GM12878 (cell line): ENCODE measurements at regions of chrX and their contacts with region 1.

Region 1: DNA sequence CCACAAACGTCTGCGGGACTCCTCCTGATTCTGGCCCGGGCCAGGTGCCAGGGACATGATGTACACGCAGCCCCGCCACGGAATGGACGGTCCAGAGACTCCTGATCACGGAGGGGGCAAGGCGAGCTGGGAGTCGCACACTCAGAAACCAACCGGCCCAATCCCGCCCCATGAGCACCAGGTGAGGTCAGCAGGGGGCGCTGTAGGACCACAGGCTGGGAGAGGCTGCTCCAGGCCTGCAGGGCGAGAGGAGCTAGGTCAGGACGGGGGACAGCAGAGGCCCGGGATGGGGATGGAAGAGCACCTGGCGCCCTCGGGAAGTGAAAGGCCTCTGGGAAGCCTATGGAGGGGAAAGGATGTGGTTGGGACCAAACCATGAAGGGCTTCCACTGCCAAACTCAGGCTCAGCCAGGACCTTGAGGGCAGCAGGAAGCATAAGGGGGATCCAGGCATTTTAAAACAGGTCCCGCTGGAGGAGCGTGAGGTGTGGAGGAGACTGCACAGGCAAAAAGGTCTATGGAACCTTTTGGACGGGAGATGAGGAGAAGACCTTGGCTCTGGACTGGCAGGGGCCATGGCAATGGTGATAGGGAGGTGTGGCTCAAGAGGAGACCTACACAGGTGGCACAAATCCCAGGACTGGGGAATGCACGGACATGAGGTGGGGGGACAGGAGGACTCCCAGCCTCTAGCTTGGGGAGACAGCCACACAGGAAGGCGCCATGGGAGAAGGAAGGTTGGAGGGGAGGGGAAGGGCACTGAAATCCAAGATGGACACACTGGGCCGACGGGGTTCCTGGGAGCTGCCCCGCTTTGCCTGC is 79.2 kb downstream of the MTMR1 start:
- DNase-seq: no peak
- ATAC-seq: peak; percentile 98
- H3K4me3 ChIP-seq: no peak overlapping the region
- H3K27ac ChIP-seq: no peak overlapping the region
- H3K4me1 ChIP-seq: no peaks in the 10 kb centered on the region
- H3K27me3 ChIP-seq: no peaks in the 10 kb centered on the region
- CTCF ChIP-seq: peak; percentile 76 to 91 (median 86)
- EP300 ChIP-seq: no peak
- POLR2A ChIP-seq: no peak
- RAD21 ChIP-seq: peak; percentile 98

Region 2: DNA sequence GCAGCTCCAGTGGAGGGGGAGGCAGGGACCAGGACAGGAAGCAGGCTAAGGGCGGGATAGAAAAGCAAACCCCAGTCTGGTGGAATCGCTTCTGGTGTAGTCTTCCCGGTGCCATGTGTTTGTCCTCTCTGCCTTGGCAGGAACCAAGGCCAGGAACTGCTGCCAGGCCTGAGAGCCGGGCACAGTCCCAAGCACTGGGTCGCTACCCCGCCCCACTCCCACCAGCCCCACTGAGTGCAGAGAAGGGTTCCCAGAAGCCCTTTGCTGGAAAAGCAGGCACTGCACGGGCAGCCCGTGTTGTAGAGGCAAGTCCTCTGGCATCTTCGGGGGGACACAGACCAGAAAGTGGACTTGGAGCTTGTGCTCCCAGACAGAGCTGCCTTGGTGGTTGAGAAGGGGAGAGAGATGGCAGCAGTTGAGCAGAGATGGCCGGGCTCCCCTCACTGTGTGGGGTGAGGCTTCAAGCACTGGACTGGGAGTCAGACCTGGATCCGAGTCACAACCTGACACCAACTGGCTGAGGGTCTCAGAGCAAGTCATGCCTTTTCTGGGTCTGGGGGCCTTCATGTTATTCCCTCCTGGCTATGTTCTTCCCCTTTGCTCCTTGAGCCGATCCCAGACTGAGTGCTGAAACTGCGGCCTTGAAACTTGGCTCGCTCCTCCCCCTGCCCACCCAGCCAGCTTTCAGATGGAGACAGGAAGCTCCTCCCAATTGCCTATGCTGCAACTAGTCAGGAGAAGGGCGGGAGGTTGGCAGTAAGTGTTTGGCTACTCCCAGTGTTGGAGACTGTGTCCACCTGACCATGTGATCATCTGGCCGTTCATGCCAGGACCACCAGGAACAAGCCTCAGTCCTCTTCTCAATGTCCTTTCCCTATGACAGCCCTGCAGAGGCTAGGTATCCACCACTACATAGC is 263.7 kb before region 1 on chrX:
- CTCF ChIA-PET with region 1: no interaction called
- POLR2A ChIA-PET with region 1: no interaction called
- RAD21 ChIA-PET with region 1: no interaction called
- SMC1A ChIA-PET with region 1: no interaction called
- in situ Hi-C with region 1: no loop called
- intact Hi-C with region 1: no loop called
- DNase-seq: no peak
- ATAC-seq: no peak
- H3K4me3 ChIP-seq: no peak overlapping the region
- H3K27ac ChIP-seq: no peak overlapping the region
- H3K4me1 ChIP-seq: no peaks in the 10 kb centered on the region
- H3K27me3 ChIP-seq: peaks cover 0 to 1% of the 10 kb centered on the region in 2 experiments; a peak in 1 of 4 replicates
- CTCF ChIP-seq: no peak
- EP300 ChIP-seq: no peak
- POLR2A ChIP-seq: no peak
- RAD21 ChIP-seq: no peak

Region 3: DNA sequence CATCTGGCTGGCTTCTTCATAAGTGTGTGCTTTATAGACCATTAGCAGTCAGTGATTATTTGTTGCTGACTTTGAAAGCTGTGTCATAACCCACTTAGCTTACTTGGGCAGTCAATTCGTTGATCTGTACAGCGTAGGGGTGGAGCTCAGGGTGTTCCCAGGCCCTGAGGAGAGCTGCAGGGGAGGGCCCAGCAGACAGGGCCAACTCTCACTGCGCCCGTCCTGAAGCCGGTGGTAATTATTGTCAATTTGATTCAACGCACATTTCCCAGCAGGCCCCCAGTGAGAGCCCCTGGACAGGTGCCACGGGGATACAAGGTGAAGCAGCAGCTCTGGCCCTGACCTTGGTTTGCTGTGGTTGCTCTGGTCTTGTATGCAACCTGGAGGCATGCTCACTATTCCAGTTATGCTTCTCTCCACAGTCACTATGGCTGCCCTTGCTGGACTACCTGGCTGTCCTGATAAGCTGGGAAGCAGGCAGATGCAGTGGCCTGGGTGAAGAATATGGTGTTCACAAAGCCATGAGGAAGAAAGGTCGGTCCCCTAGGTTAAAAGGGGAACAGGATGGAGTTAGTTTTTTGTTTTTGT is 170.7 kb after region 1 on chrX:
- CTCF ChIA-PET with region 1: no interaction called
- POLR2A ChIA-PET with region 1: no interaction called
- RAD21 ChIA-PET with region 1: no interaction called
- SMC1A ChIA-PET with region 1: no interaction called
- in situ Hi-C with region 1: no loop called
- intact Hi-C with region 1: no loop called
- DNase-seq: no peak
- ATAC-seq: no peak
- H3K4me3 ChIP-seq: no peak overlapping the region
- H3K27ac ChIP-seq: no peak overlapping the region
- H3K4me1 ChIP-seq: no peaks in the 10 kb centered on the region
- H3K27me3 ChIP-seq: no peaks in the 10 kb centered on the region; a peak in 1 of 4 replicates
- CTCF ChIP-seq: no peak
- EP300 ChIP-seq: no peak
- POLR2A ChIP-seq: no peak
- RAD21 ChIP-seq: no peak

Region 4: GRCh38 chrX:150982788-150983520 is 210.6 kb after region 1 on chrX and contains the start of gene HMGB3:
- CTCF ChIA-PET with region 1: no interaction called
- POLR2A ChIA-PET with region 1: no interaction called
- RAD21 ChIA-PET with region 1: no interaction called
- SMC1A ChIA-PET with region 1: no interaction called
- in situ Hi-C with region 1: no loop called
- intact Hi-C with region 1: loop called (anchors 10 kb)
- DNase-seq: peak; percentile 53
- ATAC-seq: peak; percentile 100
- H3K4me3 ChIP-seq: peak within 1 kb of the TSS; percentile 69
- H3K27ac ChIP-seq: peak within 1 kb of the TSS; percentile 48; the same call in 1 of the 2 replicates
- H3K4me1 ChIP-seq: no peaks in the 10 kb centered on the region
- H3K27me3 ChIP-seq: no peaks in the 10 kb centered on the region
- CTCF ChIP-seq: no peak
- EP300 ChIP-seq: no peak
- POLR2A ChIP-seq: peak; percentile 76
- RAD21 ChIP-seq: no peak
- polyA plus RNA-seq, gene HMGB3: 158 to 167 TPM

Region 5: DNA sequence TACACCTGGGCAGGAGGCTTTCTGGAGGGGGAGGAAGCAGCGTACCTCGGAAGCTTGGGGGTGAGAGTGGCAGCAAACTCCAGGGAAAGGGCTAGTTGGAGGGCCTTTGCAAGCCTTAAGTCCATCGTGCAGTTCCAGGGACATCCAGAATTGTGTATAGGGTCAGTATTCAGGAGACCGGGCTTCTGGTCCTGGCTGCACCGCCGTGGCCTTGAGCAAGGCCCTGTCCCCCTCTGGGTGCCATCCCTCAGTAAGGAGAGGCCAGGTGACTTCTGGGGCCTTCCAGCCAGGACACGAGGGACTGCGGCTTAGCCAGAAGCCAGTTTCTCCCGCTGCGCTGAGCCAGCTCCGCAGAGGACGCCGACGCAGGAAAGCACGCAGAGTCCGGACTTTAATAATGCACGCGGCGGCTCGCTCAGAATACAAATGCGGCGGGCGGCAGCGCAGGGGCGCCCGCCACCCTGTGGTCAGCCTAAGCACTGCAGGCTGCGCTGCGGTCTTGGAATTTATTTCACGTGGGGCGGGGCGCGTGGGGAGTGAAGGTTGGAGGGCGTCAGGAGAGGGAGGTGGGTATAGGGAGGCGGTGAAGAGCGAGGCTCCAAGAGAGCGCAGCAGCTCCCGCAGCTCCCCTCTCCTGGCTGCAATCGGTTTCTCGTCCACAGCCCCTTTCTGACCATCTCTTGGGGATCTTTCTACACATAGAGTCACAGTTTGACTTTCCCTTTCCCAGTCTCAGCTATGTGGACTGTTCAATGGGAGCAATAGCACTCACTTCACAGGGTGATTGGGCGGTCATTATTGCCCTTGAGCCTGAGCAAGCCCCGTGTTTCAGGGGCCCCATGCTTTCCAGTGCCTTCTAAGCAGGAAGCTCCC is 310.0 kb after region 1 on chrX:
- CTCF ChIA-PET with region 1: interaction called, 95 read pairs
- POLR2A ChIA-PET with region 1: no interaction called
- RAD21 ChIA-PET with region 1: interaction called, 43 read pairs
- SMC1A ChIA-PET with region 1: interaction called, 40 read pairs
- in situ Hi-C with region 1: loop called (anchors 5 kb)
- intact Hi-C with region 1: loop called (anchors 1 kb)
- DNase-seq: no peak
- ATAC-seq: peak; percentile 98
- H3K4me3 ChIP-seq: no peak overlapping the region
- H3K27ac ChIP-seq: no peak overlapping the region
- H3K4me1 ChIP-seq: no peaks in the 10 kb centered on the region
- H3K27me3 ChIP-seq: no peaks in the 10 kb centered on the region
- CTCF ChIP-seq: peak; percentile 86 to 94 (median 91)
- EP300 ChIP-seq: no peak
- POLR2A ChIP-seq: no peak
- RAD21 ChIP-seq: peak; percentile 80

Region 6: GRCh38 chrX:151396825-151397740 is 624.7 kb after region 1 on chrX and contains the start of gene VMA21:
- CTCF ChIA-PET with region 1: interaction called, 4 read pairs
- POLR2A ChIA-PET with region 1: no interaction called
- RAD21 ChIA-PET with region 1: no interaction called
- SMC1A ChIA-PET with region 1: no interaction called
- in situ Hi-C with region 1: loop called (anchors 25 kb)
- intact Hi-C with region 1: no loop called
- DNase-seq: peak; percentile 9
- ATAC-seq: peak; percentile 88
- H3K4me3 ChIP-seq: peak within 1 kb of the TSS; percentile 80
- H3K27ac ChIP-seq: peak within 1 kb of the TSS; percentile 80
- H3K4me1 ChIP-seq: no peaks in the 10 kb centered on the region
- H3K27me3 ChIP-seq: no peaks in the 10 kb centered on the region
- CTCF ChIP-seq: no peak
- EP300 ChIP-seq: no peak
- POLR2A ChIP-seq: peak; percentile 93
- RAD21 ChIP-seq: no peak
- polyA plus RNA-seq, gene VMA21: 12.9 to 20.5 TPM